ENCODE measurements at regions of chr13 and their contacts with region 1.

Region 1: GRCh38 chr13:75549262-75550158 is at the start of gene UCHL3:
- DNase-seq: peak; percentile 96
- ATAC-seq: peak; percentile 94
- H3K4me3 Mint-ChIP-seq: peak within 1 kb of the TSS; percentile 98
- H3K27ac Mint-ChIP-seq: peak within 1 kb of the TSS; percentile 99
- H3K4me1 Mint-ChIP-seq: peaks cover 39% of the 10 kb centered on the region
- H3K27me3 Mint-ChIP-seq: no peaks in the 10 kb centered on the region
- CTCF ChIP-seq: no peak
- total RNA-seq, gene UCHL3: 21.9 and 22.7 TPM in 2 replicates

Region 2: GRCh38 chr13:75372517-75372916 is 177.0 kb before region 1 on chr13:
- CTCF ChIA-PET with region 1: interaction called, 14 read pairs
- POLR2A ChIA-PET with region 1: interaction called, 4 read pairs
- intact Hi-C with region 1: loop called (anchors 1 kb)
- DNase-seq: no peak
- ATAC-seq: peak; percentile 67
- H3K4me3 Mint-ChIP-seq: no peak overlapping the region
- H3K27ac Mint-ChIP-seq: no peak overlapping the region
- H3K4me1 Mint-ChIP-seq: no peaks in the 10 kb centered on the region
- H3K27me3 Mint-ChIP-seq: no peaks in the 10 kb centered on the region
- CTCF ChIP-seq: peak; percentile 69

Region 3: GRCh38 chr13:75482070-75482819 is 67.3 kb before region 1 on chr13 and contains the start of gene TBC1D4:
- CTCF ChIA-PET with region 1: interaction called, 3 read pairs
- POLR2A ChIA-PET with region 1: no interaction called
- intact Hi-C with region 1: loop called (anchors 1 kb)
- DNase-seq: peak; percentile 63
- ATAC-seq: peak; percentile 86
- H3K4me3 Mint-ChIP-seq: peak within 1 kb of the TSS; percentile 98
- H3K27ac Mint-ChIP-seq: no peak within 1 kb of the TSS
- H3K4me1 Mint-ChIP-seq: peaks cover 15% of the 10 kb centered on the region
- H3K27me3 Mint-ChIP-seq: peaks cover 46% of the 10 kb centered on the region
- CTCF ChIP-seq: peak; percentile 39
- total RNA-seq, gene TBC1D4: 1.5 and 2.1 TPM in 2 replicates

Region 4: GRCh38 chr13:75537401-75538365 is 11.8 kb before region 1 on chr13 and contains the start of gene COMMD6:
- CTCF ChIA-PET with region 1: no interaction called
- POLR2A ChIA-PET with region 1: interaction called, 11 read pairs
- intact Hi-C with region 1: loop called (anchors 1 kb)
- DNase-seq: peak; percentile 68
- ATAC-seq: peak; percentile 93
- H3K4me3 Mint-ChIP-seq: peak within 1 kb of the TSS; percentile 99
- H3K27ac Mint-ChIP-seq: peak within 1 kb of the TSS; percentile 89
- H3K4me1 Mint-ChIP-seq: peaks cover 36% of the 10 kb centered on the region
- H3K27me3 Mint-ChIP-seq: no peaks in the 10 kb centered on the region
- CTCF ChIP-seq: no peak
- total RNA-seq, gene COMMD6: 174 and 177 TPM in 2 replicates

Region 5: GRCh38 chr13:75635828-75636435 is 86.4 kb after region 1 on chr13 and contains the start of gene LMO7:
- CTCF ChIA-PET with region 1: no interaction called
- POLR2A ChIA-PET with region 1: no interaction called
- intact Hi-C with region 1: loop called (anchors 1 kb)
- DNase-seq: peak; percentile 61
- ATAC-seq: peak; percentile 68
- H3K4me3 Mint-ChIP-seq: peak within 1 kb of the TSS; percentile 83
- H3K27ac Mint-ChIP-seq: no peak within 1 kb of the TSS
- H3K4me1 Mint-ChIP-seq: peaks cover 12% of the 10 kb centered on the region
- H3K27me3 Mint-ChIP-seq: no peaks in the 10 kb centered on the region
- CTCF ChIP-seq: no peak
- total RNA-seq, gene LMO7: 13.5 and 19.5 TPM in 2 replicates

Region 6: DNA sequence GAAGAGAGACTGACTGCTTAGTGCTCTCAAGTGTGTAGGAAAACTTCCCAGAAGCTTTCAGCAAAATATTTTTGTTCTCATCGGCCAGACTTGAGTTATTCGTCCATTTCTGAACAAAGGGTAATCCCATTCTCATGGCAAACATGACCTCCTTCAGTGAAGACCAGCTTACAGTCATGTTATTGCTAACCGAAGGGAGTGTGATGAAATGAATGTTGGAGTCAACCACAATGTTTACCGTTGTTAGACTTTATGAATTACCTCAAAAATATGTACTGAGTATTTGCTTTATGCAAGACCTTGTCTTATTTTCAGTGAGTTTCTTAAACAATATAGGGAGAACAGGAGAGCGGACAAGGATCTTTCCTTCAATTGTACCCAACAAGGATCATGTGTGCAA is 315.2 kb after region 1 on chr13:
- CTCF ChIA-PET with region 1: no interaction called
- POLR2A ChIA-PET with region 1: no interaction called
- intact Hi-C with region 1: no loop called
- DNase-seq: no peak
- ATAC-seq: no peak
- H3K4me3 Mint-ChIP-seq: no peak overlapping the region
- H3K27ac Mint-ChIP-seq: no peak overlapping the region
- H3K4me1 Mint-ChIP-seq: no peaks in the 10 kb centered on the region
- H3K27me3 Mint-ChIP-seq: peaks cover 3% of the 10 kb centered on the region
- CTCF ChIP-seq: no peak

Region 7: DNA sequence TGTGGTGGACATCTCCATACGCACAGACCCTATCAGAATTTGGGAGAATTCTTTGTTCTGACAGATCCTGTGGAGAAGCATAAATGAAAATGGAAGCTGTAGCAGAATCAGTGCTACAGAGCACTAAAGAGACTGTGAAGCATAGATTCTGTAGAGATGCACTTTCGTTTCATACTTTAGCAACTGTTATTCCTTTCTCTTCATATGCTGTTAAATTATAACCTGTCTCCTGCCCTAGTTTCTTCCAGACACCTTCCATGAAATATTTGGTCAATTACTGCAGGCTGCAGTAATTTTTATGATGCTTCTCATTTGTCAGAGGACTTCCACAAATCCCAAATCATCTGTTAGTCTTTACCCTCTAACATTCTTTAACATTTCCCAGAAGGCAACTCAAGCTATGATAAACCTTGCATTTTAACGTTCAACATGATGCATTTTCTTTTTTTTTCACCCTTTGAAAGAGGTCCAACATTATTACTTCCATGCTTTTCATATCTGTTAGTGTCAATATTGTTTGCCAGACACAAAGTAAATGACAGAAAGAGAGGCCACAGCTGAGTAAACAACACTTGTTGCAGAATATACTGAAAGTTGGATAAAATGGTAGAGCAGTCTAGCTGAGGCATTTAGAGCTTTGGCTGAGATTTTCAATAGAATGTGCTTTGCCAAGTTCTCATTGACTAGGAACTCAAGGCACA is 499.3 kb after region 1 on chr13:
- CTCF ChIA-PET with region 1: no interaction called
- POLR2A ChIA-PET with region 1: no interaction called
- intact Hi-C with region 1: no loop called
- DNase-seq: no peak
- ATAC-seq: no peak
- H3K4me3 Mint-ChIP-seq: no peak overlapping the region
- H3K27ac Mint-ChIP-seq: no peak overlapping the region
- H3K4me1 Mint-ChIP-seq: no peaks in the 10 kb centered on the region
- H3K27me3 Mint-ChIP-seq: peaks cover 3% of the 10 kb centered on the region
- CTCF ChIP-seq: no peak

Region 8: GRCh38 chr13:76991796-76992547 is 1442.5 kb after region 1 on chr13 and contains the start of gene CLN5:
- CTCF ChIA-PET with region 1: no interaction called
- POLR2A ChIA-PET with region 1: interaction called, 3 read pairs
- intact Hi-C with region 1: loop called (anchors 5 kb)
- DNase-seq: peak; percentile 93
- ATAC-seq: peak; percentile 95
- H3K4me3 Mint-ChIP-seq: peak within 1 kb of the TSS; percentile 98
- H3K27ac Mint-ChIP-seq: peak within 1 kb of the TSS; percentile 97
- H3K4me1 Mint-ChIP-seq: peaks cover 34% of the 10 kb centered on the region
- H3K27me3 Mint-ChIP-seq: no peaks in the 10 kb centered on the region
- CTCF ChIP-seq: no peak
- total RNA-seq, gene CLN5: 20.6 and 23.6 TPM in 2 replicates